Activated CD4-positive, alpha-beta memory T cell treated with anti-CD3 and anti-CD28 coated beads for 36 hours (primary cell): ENCODE measurements at regions of chr10 and their contacts with region 1.

Region 1: GRCh38 chr10:60444494-60445064 is 54.9 kb upstream of the ANK3 start:
- DNase-seq: no peak
- H3K4me3 Mint-ChIP-seq: no peak overlapping the region
- H3K27ac Mint-ChIP-seq: no peak overlapping the region
- H3K4me1 Mint-ChIP-seq: peaks cover 10% of the 10 kb centered on the region
- H3K27me3 Mint-ChIP-seq: no peaks in the 10 kb centered on the region

Region 2: DNA sequence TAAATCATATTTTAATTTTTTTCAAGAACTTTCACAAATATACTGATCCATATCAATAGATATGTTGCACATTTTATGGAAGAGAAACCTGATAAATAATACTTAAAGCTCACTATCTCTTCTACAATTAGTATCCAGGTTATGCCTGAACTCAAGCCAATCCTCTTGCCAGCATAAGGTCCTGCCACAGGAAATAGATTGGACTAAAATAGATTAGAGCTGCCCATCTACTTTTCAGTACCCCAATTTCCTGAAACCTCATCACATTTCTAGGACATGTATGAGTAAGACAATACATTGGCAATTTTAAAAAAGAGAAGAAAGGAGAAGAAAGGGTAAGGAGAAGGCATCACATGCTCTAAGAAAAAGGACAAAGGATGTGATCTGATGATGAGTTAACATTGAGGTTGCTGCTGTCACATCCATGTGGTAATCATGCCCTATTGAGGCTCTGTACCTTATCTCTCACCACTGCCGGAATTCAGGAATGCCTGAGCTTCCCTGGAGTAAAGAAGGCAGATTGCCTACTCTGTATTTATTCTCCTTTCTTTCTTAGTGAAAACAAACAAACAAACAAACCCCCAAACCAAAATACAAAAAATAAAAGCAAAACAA is 254.6 kb before region 1 on chr10:
- CTCF ChIA-PET with region 1: no interaction called
- POLR2A ChIA-PET with region 1: no interaction called
- intact Hi-C with region 1: no loop called
- DNase-seq: no peak
- H3K4me3 Mint-ChIP-seq: no peak overlapping the region
- H3K27ac Mint-ChIP-seq: no peak overlapping the region
- H3K4me1 Mint-ChIP-seq: no peaks in the 10 kb centered on the region
- H3K27me3 Mint-ChIP-seq: no peaks in the 10 kb centered on the region

Region 3: DNA sequence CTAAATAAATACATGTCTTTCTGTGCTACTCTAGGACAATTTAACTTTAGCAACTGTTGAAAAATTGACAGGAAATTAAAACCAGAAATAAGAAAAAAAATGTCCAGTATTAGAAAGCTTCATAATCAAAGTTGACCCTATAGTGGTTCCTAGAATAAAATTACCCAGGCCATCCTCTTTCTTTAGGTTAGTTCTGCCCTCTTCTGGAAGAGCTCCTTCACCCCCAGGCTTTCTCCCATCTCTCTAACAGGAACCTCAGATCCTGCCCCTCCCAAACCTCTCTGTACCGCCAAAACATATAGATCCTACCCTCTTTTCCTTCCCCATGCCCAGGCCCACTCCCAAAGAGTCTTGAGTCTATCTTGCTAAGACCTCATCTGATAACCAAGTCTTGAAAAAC is 174.3 kb after region 1 on chr10:
- CTCF ChIA-PET with region 1: interaction called, 11 read pairs
- POLR2A ChIA-PET with region 1: no interaction called
- intact Hi-C with region 1: no loop called
- DNase-seq: no peak
- H3K4me3 Mint-ChIP-seq: no peak overlapping the region
- H3K27ac Mint-ChIP-seq: no peak overlapping the region
- H3K4me1 Mint-ChIP-seq: peaks cover 11% of the 10 kb centered on the region
- H3K27me3 Mint-ChIP-seq: no peaks in the 10 kb centered on the region